OCI-LY7 (cell line): ENCODE measurements at regions of chr11 and their contacts with region 1.

Region 1: DNA sequence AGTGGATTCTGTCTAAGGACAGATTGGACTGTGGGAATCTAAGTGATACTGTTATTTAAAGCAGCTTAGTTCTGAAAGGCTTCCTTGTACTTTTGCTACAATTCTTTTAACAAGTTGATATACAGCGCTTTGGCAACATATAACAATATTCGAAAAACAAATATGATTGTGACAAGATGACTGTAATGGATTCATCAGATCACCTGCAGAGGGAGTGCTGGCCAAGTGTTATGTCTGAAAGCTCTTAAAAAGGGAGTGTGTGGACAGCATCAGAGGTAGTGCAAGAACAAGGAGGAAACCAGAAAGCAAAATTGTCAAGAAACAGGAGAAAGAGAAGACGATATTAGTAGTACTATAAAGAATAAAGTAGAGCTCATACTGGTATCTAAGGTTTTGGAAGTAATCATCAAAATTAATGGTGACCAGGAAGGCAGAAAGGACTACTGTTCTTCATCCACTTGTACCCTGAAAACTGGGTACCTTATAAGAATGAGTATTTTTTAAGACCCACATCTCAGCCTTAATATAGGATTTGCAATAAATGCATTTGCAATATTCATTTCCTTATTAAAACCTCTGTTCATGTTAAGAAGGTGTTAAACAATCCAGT is 1112.0 kb upstream of the CCDC90B start:
- DNase-seq: peak; percentile 26
- H3K4me3 ChIP-seq: no peak overlapping the region
- H3K27ac ChIP-seq: no peak overlapping the region
- H3K4me1 ChIP-seq: no peaks in the 10 kb centered on the region
- CTCF ChIP-seq: peak; percentile 72

Region 2: DNA sequence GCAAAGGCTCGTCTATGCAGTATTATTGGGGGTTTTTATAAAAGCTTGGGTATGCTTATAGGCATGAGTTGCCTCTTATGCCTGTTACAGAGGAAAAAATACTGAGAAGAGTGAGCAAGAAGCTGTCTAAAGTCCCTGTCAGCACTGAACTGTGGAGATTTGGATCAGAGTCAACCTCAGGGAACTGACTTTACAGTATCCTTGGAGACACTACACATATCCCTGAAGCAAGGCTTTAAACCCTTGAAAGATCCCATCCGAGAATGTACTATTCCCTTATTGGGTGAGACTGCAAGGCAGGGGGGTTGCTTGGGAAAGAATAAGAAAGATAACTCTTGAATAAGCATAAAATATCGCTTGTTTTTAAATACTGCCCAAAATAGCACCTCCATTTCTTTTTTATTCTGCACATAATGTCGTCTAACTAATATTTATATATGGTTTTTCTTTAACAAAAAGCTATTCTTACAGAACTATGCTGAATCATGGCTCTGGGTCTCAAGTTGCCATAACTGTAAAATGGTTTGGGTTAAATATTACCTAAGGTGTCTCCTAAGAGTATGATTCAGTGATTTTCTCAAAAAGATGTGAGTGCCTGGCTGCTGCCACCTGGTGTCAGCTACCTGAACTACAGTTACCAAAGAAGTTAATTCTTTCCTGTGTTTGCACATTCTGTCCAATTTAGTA is 166.2 kb after region 1 on chr11:
- CTCF ChIA-PET with region 1: no interaction called
- POLR2A ChIA-PET with region 1: no interaction called
- intact Hi-C with region 1: loop called (anchors 5 kb)
- DNase-seq: peak; percentile 69
- H3K4me3 ChIP-seq: no peak overlapping the region
- H3K27ac ChIP-seq: no peak overlapping the region
- H3K4me1 ChIP-seq: peaks cover 35% of the 10 kb centered on the region
- CTCF ChIP-seq: peak; percentile 97

Region 3: GRCh38 chr11:84800755-84801346 is 402.7 kb after region 1 on chr11:
- CTCF ChIA-PET with region 1: no interaction called
- POLR2A ChIA-PET with region 1: no interaction called
- intact Hi-C with region 1: no loop called
- DNase-seq: no peak
- H3K4me3 ChIP-seq: no peak overlapping the region
- H3K27ac ChIP-seq: no peak overlapping the region
- H3K4me1 ChIP-seq: no peaks in the 10 kb centered on the region
- CTCF ChIP-seq: peak; percentile 39; the same call in 1 of the 2 replicates